ENCODE measurements at regions of chr7 and their contacts with region 1.

Region 1: DNA sequence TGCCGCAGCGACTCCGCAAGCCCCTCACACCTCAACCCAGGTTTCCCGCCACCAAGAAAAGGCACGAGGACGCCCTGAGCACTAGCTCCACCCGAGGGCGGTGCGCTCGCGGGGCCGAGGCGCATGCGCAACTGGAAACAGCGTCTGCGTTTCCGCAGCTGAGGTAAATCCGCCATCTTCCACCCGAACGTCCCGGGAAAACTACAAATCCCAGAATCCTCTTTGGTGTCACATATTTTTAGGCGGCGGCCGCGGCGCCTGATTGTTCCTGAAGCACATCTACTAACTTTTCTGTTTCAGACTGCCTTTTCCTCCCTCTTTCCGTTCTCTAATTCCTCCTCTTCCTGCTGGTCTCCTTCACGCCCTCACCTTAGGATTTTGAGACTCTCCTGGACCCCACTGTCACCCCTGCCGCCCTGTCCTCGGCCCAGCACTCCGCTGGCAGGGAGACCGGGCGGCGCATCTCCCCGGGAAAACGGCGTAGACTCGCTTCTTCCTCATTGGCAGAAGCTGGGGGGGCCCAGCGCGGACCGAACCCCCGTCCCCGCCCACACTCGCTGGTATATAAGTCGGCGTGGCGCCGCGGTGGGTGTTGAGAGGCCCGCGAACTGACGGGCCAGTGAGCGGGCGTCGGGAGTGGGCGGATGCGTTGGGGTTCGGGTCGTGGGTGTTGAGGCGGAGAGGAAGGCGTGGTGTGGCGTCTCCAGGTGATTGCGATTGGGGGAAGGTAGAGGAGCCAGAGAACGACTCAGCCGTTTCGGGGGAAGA is at the start of gene ZCWPW1:
- DNase-seq: peak; percentile 90 to 96
- H3K4me3 ChIP-seq: peak within 1 kb of the TSS; percentile 73 to 85 (median 80)
- H3K27ac ChIP-seq: peak within 1 kb of the TSS; percentile 96
- H3K4me1 ChIP-seq: peaks cover 0 to 16% (median 8%) of the 10 kb centered on the region in 4 experiments; a peak in 6 of 7 replicates
- H3K27me3 ChIP-seq: peaks cover 0 to 6% (median 6%) of the 10 kb centered on the region in 4 experiments; a peak in 4 of 7 replicates
- CTCF ChIP-seq: 0 out of 4 replicates have a peak, but pooled peaks of 1 of the 3 experiments have one; percentile 6
- EP300 ChIP-seq: no peak
- POLR2A ChIP-seq: peak in 1 of 2 experiments; percentile 86; a peak in 2 of 3 replicates
- RAD21 ChIP-seq: no peak
- total RNA-seq, gene ZCWPW1: 1.4 and 2.7 TPM in 2 replicates

Region 2: GRCh38 chr7:100369105-100369504 is 59.3 kb before region 1 on chr7:
- CTCF ChIA-PET with region 1: no interaction called
- POLR2A ChIA-PET with region 1: interaction called, 15 read pairs
- DNase-seq: no peak
- H3K4me3 ChIP-seq: no peak overlapping the region
- H3K27ac ChIP-seq: no peak overlapping the region
- H3K4me1 ChIP-seq: peaks cover 0 to 28% (median 16%) of the 10 kb centered on the region in 4 experiments; a peak in 6 of 7 replicates
- H3K27me3 ChIP-seq: no peaks in the 10 kb centered on the region
- CTCF ChIP-seq: no peak
- EP300 ChIP-seq: no peak
- POLR2A ChIP-seq: peak in 1 of 2 experiments; percentile 47; a peak in 1 of 3 replicates
- RAD21 ChIP-seq: no peak

Region 3: DNA sequence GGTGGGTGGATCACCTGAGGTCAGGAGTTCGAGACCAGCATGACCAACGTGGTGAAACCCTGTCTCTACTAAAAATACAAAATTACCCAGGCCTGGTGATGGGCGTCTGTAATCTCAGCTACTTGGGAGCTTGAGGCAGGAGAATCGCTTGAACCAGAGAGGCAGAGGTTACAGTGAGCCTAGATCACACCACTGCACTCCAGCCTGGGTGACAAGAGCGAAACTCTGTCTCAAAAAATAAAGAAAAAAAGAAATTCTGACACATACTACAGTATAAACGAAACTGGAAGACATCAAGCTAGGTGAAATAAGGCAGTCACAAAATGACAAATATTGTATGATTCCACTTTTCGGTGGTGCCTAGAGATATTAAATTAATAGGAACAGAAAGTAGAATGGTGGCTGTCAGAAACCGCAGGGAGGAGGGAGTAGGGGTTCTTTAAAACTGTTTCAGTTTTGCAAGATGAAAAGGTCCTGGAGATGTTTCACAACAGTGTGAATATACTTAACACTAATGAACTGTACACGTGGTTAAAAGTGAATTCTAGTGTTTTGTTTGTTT is 31.9 kb before region 1 on chr7:
- CTCF ChIA-PET with region 1: interaction called, 17 read pairs
- POLR2A ChIA-PET with region 1: interaction called, 17 read pairs
- DNase-seq: no peak
- H3K4me3 ChIP-seq: no peak overlapping the region
- H3K27ac ChIP-seq: no peak overlapping the region
- H3K4me1 ChIP-seq: peaks cover 0 to 10% (median 5%) of the 10 kb centered on the region in 4 experiments; a peak in 6 of 7 replicates
- H3K27me3 ChIP-seq: peaks cover 0 to 2% (median 0%) of the 10 kb centered on the region in 4 experiments; a peak in 1 of 7 replicates
- CTCF ChIP-seq: no peak
- EP300 ChIP-seq: no peak
- POLR2A ChIP-seq: no peak
- RAD21 ChIP-seq: no peak

Region 4: GRCh38 chr7:100444311-100445278 is 16.2 kb after region 1 on chr7:
- CTCF ChIA-PET with region 1: interaction called, 9 read pairs
- POLR2A ChIA-PET with region 1: interaction called, 81 read pairs
- DNase-seq: no peak
- H3K4me3 ChIP-seq: no peak overlapping the region
- H3K27ac ChIP-seq: no peak overlapping the region
- H3K4me1 ChIP-seq: peaks cover 0 to 5% (median 2%) of the 10 kb centered on the region in 4 experiments; a peak in 3 of 7 replicates
- H3K27me3 ChIP-seq: no peaks in the 10 kb centered on the region
- CTCF ChIP-seq: no peak
- EP300 ChIP-seq: no peak
- POLR2A ChIP-seq: no peak
- RAD21 ChIP-seq: no peak

Region 5: DNA sequence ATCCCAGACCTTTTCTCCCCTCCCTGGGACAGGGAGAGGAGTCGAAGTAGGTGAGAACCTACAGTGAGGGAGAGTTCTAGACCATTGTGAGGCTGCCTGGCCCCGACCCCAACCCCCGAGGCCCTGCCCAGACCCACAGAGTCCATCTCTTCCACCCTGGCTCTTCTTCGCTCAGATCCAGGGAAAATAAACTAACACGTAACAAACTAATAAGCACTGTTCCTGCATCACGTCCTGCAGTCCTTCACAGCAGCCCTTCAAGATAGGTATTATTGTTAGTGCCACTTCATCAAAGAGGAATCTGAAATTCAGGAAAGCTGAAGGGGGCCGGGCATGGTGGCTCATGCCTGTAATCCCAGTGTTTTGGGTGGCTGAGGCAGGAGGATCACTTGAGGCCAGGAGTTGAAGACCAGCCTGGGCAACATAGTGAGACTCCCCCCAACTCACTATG is 35.9 kb after region 1 on chr7 and contains the start of gene SPACDR:
- CTCF ChIA-PET with region 1: interaction called, 3 read pairs
- POLR2A ChIA-PET with region 1: interaction called, 25 read pairs
- DNase-seq: no peak
- H3K4me3 ChIP-seq: no peak within 1 kb of the TSS
- H3K27ac ChIP-seq: no peak within 1 kb of the TSS
- H3K4me1 ChIP-seq: no peaks in the 10 kb centered on the region; a peak in 1 of 7 replicates
- H3K27me3 ChIP-seq: no peaks in the 10 kb centered on the region
- CTCF ChIP-seq: no peak
- EP300 ChIP-seq: no peak
- POLR2A ChIP-seq: no peak
- RAD21 ChIP-seq: no peak
- total RNA-seq, gene SPACDR: 0.33 TPM in 1 of 2 replicates, not detected in the other

Region 6: DNA sequence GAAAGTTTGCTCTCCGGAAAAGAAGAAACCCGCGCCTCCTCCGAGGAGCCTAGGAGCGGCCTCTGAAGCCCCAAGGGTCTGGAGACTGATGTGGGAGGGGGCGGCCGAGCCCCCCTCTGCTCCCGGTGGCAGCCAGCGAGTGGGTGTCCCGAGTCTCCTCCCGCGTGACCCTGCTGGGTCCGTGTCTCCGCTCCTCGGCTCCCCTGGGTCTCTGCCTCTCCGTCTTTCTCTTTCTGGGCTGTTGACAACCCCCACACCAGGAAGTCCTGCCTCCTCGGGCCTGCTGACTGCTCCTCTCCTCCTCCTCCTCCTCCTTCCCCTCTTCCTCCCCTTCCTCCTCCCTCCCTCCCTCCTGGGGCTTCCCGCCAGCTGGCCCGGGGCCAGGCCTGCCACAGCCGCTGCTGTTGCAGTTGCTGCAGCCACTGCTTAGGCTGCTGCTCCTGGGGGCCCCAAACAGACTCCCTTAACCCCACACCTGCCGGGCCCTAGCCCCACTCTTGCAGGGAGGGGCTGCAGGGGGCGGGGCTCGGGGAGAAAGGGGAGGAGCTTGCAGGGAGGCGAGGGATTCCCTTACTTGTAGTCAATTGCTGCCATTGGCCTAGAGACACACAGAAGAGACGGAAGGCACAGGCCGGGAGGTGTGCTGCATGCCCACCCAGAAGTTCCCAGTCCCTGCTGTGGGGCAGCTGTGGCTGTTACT is 50.7 kb after region 1 on chr7 and contains the start of gene TSC22D4:
- CTCF ChIA-PET with region 1: no interaction called
- POLR2A ChIA-PET with region 1: interaction called, 20 read pairs
- DNase-seq: peak; percentile 90 to 96
- H3K4me3 ChIP-seq: peak within 1 kb of the TSS; percentile 78 to 86 (median 81)
- H3K27ac ChIP-seq: no peak within 1 kb of the TSS
- H3K4me1 ChIP-seq: peaks cover 0 to 12% (median 6%) of the 10 kb centered on the region in 4 experiments; a peak in 5 of 7 replicates
- H3K27me3 ChIP-seq: no peaks in the 10 kb centered on the region
- CTCF ChIP-seq: peak in 1 of 3 experiments; percentile 7; a peak in 1 of 4 replicates
- EP300 ChIP-seq: no peak; a peak in 1 of 3 replicates
- POLR2A ChIP-seq: no peak; a peak in 1 of 3 replicates
- RAD21 ChIP-seq: peak in 1 of 2 experiments; percentile 15; a peak in 1 of 4 replicates
- total RNA-seq, gene TSC22D4: 20.3 and 24.1 TPM in 2 replicates

Region 7: DNA sequence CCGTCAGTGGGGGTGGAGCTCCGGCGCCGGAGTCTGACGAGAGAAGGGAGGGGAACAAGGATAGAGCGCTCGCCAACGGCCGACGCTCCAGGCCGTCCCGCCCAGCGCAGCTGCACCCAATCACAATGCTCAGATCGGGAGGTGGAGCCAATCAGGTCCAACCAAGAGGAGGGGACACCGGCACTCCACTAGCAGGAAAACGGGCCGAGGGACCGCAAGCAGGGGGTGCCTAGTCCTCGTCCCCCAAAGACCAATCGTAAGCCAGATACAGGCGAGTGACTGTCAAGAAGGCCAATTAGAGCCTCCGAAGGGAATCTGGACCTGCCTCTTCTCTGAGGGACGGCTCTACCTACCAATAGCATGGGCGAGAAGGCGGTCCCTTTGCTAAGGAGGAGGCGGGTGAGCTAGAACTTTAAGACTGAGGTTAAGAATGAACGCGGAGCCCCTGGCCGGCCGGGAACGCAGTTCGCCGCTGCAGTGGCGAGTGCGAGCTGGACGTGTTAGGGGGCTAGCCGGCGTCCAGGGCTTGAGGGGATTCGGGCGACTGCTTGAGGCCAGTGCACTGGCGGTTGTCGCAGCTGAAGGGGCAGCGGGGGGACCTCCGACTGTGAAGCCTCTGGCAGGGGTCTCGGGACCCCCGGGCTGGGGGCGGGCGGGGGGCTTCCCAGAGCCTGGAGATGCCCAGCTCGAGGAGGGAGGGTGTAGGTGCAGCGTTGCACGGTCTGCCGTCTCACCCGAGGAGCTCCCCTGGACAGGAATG is 158.1 kb after region 1 on chr7 and contains the start of gene FBXO24:
- CTCF ChIA-PET with region 1: interaction called, 3 read pairs
- POLR2A ChIA-PET with region 1: interaction called, 11 read pairs
- DNase-seq: peak; percentile 99 to 100
- H3K4me3 ChIP-seq: peak within 1 kb of the TSS; percentile 80 to 88 (median 80)
- H3K27ac ChIP-seq: peak within 1 kb of the TSS; percentile 86
- H3K4me1 ChIP-seq: peaks cover 0 to 36% (median 20%) of the 10 kb centered on the region in 4 experiments; a peak in 6 of 7 replicates
- H3K27me3 ChIP-seq: peaks cover 0 to 2% (median under 1%) of the 10 kb centered on the region in 4 experiments; a peak in 3 of 7 replicates
- CTCF ChIP-seq: 0 out of 4 replicates have a peak, but pooled peaks of 1 of the 3 experiments have one; percentile 0
- EP300 ChIP-seq: no peak
- POLR2A ChIP-seq: peak in 1 of 2 experiments; percentile 47; a peak in 2 of 3 replicates
- RAD21 ChIP-seq: 0 out of 4 replicates have a peak, but pooled peaks of 1 of the 2 experiments have one; percentile 4
- total RNA-seq, gene FBXO24: 0.35 and 0.59 TPM in 2 replicates

Region 8: DNA sequence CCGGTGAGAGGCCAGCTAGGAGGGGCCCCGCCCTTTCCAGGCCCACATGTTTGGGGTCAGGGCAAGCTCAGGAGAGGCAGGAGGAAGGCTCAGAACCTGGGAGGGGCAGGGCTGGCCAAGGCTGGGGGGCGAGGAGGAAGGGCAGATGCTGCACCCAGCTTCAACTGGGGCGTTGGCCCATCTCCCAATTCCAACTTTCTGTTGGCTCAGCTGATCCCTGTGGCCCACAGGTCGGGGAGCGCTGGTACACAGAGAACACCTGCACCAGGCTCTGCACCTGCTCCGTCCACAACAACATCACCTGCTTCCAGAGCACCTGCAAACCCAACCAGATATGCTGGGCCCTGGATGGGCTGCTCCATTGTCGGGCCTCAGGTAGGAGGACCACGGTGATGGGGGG is 345.1 kb after region 1 on chr7:
- CTCF ChIA-PET with region 1: no interaction called
- POLR2A ChIA-PET with region 1: no interaction called
- DNase-seq: no peak
- H3K4me3 ChIP-seq: no peak overlapping the region
- H3K27ac ChIP-seq: no peak overlapping the region
- H3K4me1 ChIP-seq: no peaks in the 10 kb centered on the region; a peak in 1 of 7 replicates
- H3K27me3 ChIP-seq: no peaks in the 10 kb centered on the region
- CTCF ChIP-seq: no peak
- EP300 ChIP-seq: no peak
- POLR2A ChIP-seq: no peak
- RAD21 ChIP-seq: no peak